ENCODE measurements at regions of chr6 and their contacts with region 1.

Region 1: DNA sequence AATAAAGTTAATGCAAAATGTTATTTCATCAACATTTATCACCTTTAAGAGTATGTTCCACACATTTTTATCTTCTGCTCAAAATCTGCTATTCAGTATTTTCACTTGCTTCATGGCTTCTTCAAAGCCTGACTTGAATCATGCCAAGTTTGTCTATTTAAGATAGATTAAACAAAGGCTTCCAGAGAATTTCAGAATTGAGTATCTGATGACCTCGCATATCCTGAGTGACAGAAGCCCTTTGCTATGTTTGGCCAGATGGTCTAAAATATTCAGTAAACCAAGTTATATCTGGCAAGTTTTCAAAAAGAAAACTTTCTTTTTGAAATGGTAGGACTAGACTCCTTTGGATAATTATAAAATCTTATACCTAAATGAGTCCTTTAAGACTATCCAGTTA is 348.9 kb upstream of the KCNQ5 start:
- DNase-seq: peak; percentile 73
- ATAC-seq: peak; percentile 76
- H3K4me3 ChIP-seq: no peak overlapping the region
- H3K27ac ChIP-seq: no peak overlapping the region
- H3K4me1 ChIP-seq: no peaks in the 10 kb centered on the region
- H3K27me3 ChIP-seq: no peaks in the 10 kb centered on the region
- CTCF ChIP-seq: no peak
- POLR2A ChIP-seq: no peak
- RAD21 ChIP-seq: no peak

Region 2: GRCh38 chr6:71808865-71809264 is 464.1 kb before region 1 on chr6:
- CTCF ChIA-PET with region 1: no interaction called
- POLR2A ChIA-PET with region 1: no interaction called
- dilution Hi-C with region 1: no loop called
- in situ Hi-C with region 1: no loop called
- intact Hi-C with region 1: no loop called
- DNase-seq: no peak
- ATAC-seq: no peak
- H3K4me3 ChIP-seq: no peak overlapping the region
- H3K27ac ChIP-seq: no peak overlapping the region
- H3K4me1 ChIP-seq: no peaks in the 10 kb centered on the region
- H3K27me3 ChIP-seq: no peaks in the 10 kb centered on the region
- CTCF ChIP-seq: no peak
- POLR2A ChIP-seq: no peak
- RAD21 ChIP-seq: no peak

Region 3: GRCh38 chr6:72390548-72390947 is 117.6 kb after region 1 on chr6:
- CTCF ChIA-PET with region 1: no interaction called
- POLR2A ChIA-PET with region 1: no interaction called
- dilution Hi-C with region 1: no loop called
- in situ Hi-C with region 1: no loop called
- intact Hi-C with region 1: loop called (anchors 10 kb)
- DNase-seq: no peak
- ATAC-seq: no peak
- H3K4me3 ChIP-seq: no peak overlapping the region
- H3K27ac ChIP-seq: no peak overlapping the region
- H3K4me1 ChIP-seq: no peaks in the 10 kb centered on the region
- H3K27me3 ChIP-seq: no peaks in the 10 kb centered on the region
- CTCF ChIP-seq: no peak
- POLR2A ChIP-seq: no peak
- RAD21 ChIP-seq: no peak